Activated CD4-positive, alpha-beta memory T cell treated with anti-CD3 and anti-CD28 coated beads, Interleukin-2, amount 10 ng/mL, durations not matched to agents 7 days and 5 days (primary cell): ENCODE measurements at regions of chr18 and their contacts with region 1.

Region 1: DNA sequence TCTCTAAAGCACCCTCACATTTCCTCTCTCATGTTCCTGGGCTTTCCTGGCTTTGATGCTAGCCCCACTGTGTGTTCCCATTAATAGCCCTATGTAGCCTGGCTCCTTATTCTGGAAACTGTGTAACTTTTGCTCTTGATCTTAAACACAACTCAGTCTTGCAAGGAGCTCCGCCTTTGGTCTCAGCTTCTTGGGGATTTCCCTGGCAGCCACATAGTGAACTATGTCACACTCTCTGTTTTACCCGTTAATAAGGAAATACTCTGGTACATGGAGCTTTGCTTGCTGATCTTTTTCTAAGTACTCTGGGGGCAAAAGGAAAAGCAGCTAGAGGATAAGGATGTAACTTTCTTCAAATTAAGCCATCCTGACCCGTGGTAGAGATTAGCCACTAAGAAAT is 259.3 kb downstream of the NEDD4L start:
- DNase-seq: no peak
- H3K4me3 Mint-ChIP-seq: no peak overlapping the region
- H3K27ac Mint-ChIP-seq: no peak overlapping the region
- H3K4me1 Mint-ChIP-seq: peaks cover 16% of the 10 kb centered on the region
- H3K27me3 Mint-ChIP-seq: peaks cover 22% of the 10 kb centered on the region

Region 2: DNA sequence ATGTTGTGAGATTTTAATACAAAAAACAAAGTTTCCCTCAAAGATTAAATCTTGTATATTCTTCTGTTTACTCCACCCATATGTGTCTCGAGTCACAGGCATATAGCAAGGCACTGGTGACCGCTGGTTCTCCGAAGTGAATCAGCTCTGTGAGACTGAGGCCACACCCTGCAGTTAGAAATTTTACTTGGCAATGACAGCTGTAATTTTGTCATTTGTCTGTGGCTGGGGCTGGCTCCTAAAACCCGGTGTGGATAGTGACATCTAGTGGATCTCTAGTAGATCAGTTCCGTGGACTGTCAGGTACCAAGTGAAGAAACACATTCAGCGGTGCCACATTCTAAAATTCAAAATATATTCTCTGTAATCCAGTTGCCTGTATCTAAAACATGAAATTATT is 18.6 kb after region 1 on chr18:
- CTCF ChIA-PET with region 1: interaction called, 10 read pairs
- POLR2A ChIA-PET with region 1: interaction called, 3 read pairs
- DNase-seq: peak; percentile 69
- H3K4me3 Mint-ChIP-seq: peak overlapping the region; percentile 19
- H3K27ac Mint-ChIP-seq: peak overlapping the region; percentile 68
- H3K4me1 Mint-ChIP-seq: peaks cover 22% of the 10 kb centered on the region
- H3K27me3 Mint-ChIP-seq: peaks cover 6% of the 10 kb centered on the region